OCI-LY7 (cell line): ENCODE measurements at regions of chr22 and their contacts with region 1.

Region 1: DNA sequence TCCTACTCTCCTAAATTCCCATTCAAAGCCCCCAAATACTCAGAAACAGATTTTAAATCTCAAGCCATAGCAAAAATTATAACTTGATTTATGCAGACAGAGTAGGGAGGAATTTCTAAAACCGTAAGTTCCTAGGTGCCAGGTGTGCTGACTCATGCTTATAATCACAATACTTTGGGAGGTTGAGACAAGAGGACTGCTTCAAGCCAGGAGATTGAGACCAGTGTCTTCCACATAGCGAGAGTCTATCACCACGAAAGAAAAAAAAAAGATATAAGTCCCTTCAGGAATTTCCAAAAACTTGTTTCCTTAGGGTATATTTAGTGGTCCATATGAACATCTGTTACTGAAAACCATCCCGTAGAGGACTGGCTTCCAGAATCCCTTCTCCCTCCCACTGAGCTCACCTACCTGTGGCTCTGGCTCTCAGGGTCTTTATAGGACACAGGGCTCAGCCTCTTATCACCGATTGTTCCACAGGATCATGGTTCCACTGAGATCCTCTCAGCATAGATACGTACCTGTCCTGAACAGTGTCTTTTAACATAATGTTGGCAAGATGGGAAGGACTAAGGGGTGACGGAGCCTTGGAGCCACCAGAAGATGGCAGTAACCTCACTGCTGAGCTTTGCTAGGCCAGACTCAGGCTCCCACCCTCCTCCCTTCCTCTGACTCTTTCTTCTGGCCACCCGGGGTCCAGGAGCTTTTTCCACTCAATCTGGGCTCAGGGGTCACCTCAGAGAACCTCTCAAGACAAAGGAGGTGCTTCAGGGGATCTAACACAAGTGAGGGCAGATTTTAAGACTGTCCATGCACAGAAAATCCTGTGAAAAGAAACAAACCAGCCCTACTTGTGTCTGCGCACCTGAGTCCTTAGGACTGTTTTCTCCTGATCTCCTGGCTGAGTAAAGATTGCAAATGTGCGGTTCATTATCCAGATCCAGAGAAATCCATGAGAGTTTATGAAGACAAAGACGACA is 117.5 kb upstream of the TOP3B start:
- DNase-seq: peak; percentile 71
- H3K4me3 ChIP-seq: peak overlapping the region; percentile 55
- H3K27ac ChIP-seq: peak overlapping the region; percentile 84
- H3K4me1 ChIP-seq: peaks cover 40% of the 10 kb centered on the region
- CTCF ChIP-seq: peak; percentile 86

Region 2: GRCh38 chr22:22088658-22089458 is 11.3 kb before region 1 on chr22:
- CTCF ChIA-PET with region 1: no interaction called
- POLR2A ChIA-PET with region 1: no interaction called
- intact Hi-C with region 1: no loop called
- DNase-seq: no peak
- H3K4me3 ChIP-seq: no peak overlapping the region
- H3K27ac ChIP-seq: no peak overlapping the region
- H3K4me1 ChIP-seq: peaks cover 14% of the 10 kb centered on the region
- CTCF ChIP-seq: no peak

Region 3: GRCh38 chr22:22110548-22111266 is 10.6 kb after region 1 on chr22:
- CTCF ChIA-PET with region 1: interaction called, 14 read pairs
- POLR2A ChIA-PET with region 1: interaction called, 17 read pairs
- intact Hi-C with region 1: no loop called
- DNase-seq: peak; percentile 95
- H3K4me3 ChIP-seq: peak overlapping the region; percentile 38
- H3K27ac ChIP-seq: peak overlapping the region; percentile 64
- H3K4me1 ChIP-seq: peaks cover 34% of the 10 kb centered on the region
- CTCF ChIP-seq: peak; percentile 89